Mammary epithelial cell (primary cell): ENCODE measurements at regions of chr5 and their contacts with region 1.

Region 1: GRCh38 chr5:33180900-33181299 is 259.9 kb upstream of the TARS1 start:
- DNase-seq: peak; percentile 24
- H3K4me3 ChIP-seq: no peak overlapping the region
- H3K27ac ChIP-seq: no peak overlapping the region
- H3K4me1 ChIP-seq: no peaks in the 10 kb centered on the region
- H3K27me3 ChIP-seq: no peaks in the 10 kb centered on the region
- CTCF ChIP-seq: peak in 1 of 2 donors; percentile 55

Region 2: DNA sequence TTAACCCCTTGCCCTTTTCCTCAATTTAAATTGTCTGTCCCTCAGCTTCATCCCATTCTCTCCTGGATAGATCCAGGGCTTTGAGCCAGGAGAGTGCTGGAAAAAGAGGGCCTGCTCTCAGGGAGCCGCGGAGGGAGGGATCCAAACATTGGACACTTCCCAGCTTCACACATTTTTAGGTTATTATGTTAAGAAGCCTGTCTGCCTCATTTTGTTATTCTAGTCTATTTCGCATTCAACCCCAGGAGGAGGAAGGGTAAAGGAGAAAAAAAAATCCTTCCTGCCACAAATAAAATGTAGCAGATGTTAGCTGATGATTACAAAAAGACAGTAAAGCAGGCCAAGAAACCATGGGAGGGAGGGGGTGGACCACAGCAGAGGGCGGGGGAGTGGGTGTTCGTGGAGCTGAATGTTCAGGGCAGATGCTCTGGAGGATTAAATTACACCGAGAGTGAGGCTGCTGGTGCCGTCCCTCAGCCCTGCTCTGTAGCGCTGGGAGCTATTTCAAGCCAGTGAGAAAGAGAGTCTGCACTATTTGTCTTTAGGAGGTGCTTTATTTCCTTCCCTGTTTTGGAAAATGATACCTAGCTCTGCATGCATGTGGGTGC is 675.8 kb before region 1 on chr5:
- CTCF ChIA-PET with region 1: no interaction called
- dilution Hi-C with region 1: no loop called
- in situ Hi-C with region 1: no loop called
- intact Hi-C with region 1: loop called (anchors 10 kb)
- DNase-seq: no peak
- H3K4me3 ChIP-seq: no peak overlapping the region
- H3K27ac ChIP-seq: no peak overlapping the region
- H3K4me1 ChIP-seq: peaks cover 33% of the 10 kb centered on the region
- H3K27me3 ChIP-seq: no peaks in the 10 kb centered on the region
- CTCF ChIP-seq: no peak

Region 3: GRCh38 chr5:32690153-32690552 is 490.7 kb before region 1 on chr5:
- CTCF ChIA-PET with region 1: no interaction called
- dilution Hi-C with region 1: no loop called
- in situ Hi-C with region 1: no loop called
- intact Hi-C with region 1: loop called (anchors 5 kb)
- DNase-seq: no peak
- H3K4me3 ChIP-seq: no peak overlapping the region
- H3K27ac ChIP-seq: no peak overlapping the region
- H3K4me1 ChIP-seq: no peaks in the 10 kb centered on the region
- H3K27me3 ChIP-seq: no peaks in the 10 kb centered on the region
- CTCF ChIP-seq: peak; percentile 7 to 36

Region 4: GRCh38 chr5:32767948-32768427 is 412.9 kb before region 1 on chr5:
- CTCF ChIA-PET with region 1: no interaction called
- dilution Hi-C with region 1: no loop called
- in situ Hi-C with region 1: no loop called
- intact Hi-C with region 1: no loop called
- DNase-seq: peak; percentile 86
- H3K4me3 ChIP-seq: no peak overlapping the region
- H3K27ac ChIP-seq: no peak overlapping the region
- H3K4me1 ChIP-seq: no peaks in the 10 kb centered on the region
- H3K27me3 ChIP-seq: no peaks in the 10 kb centered on the region
- CTCF ChIP-seq: no peak

Region 5: DNA sequence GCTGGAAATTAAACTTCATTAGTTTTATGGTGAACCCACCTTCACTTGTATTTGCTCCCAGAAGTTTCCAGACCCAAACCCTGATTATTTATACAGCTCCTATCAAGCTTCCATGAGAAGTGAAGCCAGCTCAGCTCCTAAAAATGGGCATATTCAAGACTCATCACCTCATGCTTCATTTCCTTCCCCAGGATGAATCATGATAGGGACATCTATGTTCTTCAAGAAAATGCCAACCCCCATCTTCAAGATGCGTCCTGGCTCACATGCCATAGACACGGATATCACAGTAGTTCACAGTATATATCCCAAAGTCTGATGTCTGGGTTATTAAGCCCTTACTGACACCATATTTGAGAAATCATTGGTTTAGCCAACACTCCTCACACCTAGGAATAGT is 252.1 kb before region 1 on chr5:
- CTCF ChIA-PET with region 1: no interaction called
- dilution Hi-C with region 1: no loop called
- in situ Hi-C with region 1: no loop called
- intact Hi-C with region 1: loop called (anchors 2 kb)
- DNase-seq: no peak
- H3K4me3 ChIP-seq: no peak overlapping the region
- H3K27ac ChIP-seq: no peak overlapping the region
- H3K4me1 ChIP-seq: no peaks in the 10 kb centered on the region
- H3K27me3 ChIP-seq: no peaks in the 10 kb centered on the region
- CTCF ChIP-seq: no peak

Region 6: DNA sequence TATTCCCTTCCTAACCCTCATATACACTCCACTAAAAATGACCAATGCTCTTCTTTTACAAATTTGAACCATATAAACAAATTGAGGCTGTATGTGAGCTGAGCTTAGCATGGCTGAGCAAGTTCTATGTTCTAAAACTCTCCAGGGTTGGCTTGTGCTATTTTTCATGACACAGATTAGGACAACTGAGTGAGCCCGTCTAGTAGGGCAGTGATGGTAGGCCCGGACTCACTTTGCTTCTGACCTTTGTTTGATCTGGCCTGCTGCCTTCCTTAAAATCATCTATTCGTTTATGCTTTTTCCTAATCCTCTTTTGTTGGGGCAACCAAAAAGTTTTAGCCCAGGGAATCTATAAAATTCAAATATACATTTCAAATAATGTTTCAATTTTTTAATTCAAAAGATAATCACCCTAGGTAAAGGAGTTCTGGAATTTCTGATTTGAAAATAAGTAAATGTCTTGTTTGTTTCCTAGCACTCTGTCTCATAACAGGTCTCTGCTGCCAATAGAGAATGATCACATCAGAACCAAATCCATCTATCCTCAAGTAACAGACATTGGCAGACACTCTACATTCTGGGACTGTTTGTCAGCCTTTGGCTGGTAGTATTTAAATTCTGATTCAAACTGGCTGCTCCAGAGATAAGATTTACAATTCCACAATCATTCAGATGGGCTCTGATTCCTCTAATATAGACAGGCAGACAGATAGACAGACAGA is 42.8 kb after region 1 on chr5:
- CTCF ChIA-PET with region 1: no interaction called
- dilution Hi-C with region 1: no loop called
- in situ Hi-C with region 1: no loop called
- intact Hi-C with region 1: no loop called
- DNase-seq: no peak
- H3K4me3 ChIP-seq: no peak overlapping the region
- H3K27ac ChIP-seq: no peak overlapping the region
- H3K4me1 ChIP-seq: no peaks in the 10 kb centered on the region
- H3K27me3 ChIP-seq: no peaks in the 10 kb centered on the region
- CTCF ChIP-seq: no peak

Region 7: GRCh38 chr5:33241802-33242201 is 60.9 kb after region 1 on chr5:
- CTCF ChIA-PET with region 1: no interaction called
- dilution Hi-C with region 1: no loop called
- in situ Hi-C with region 1: no loop called
- intact Hi-C with region 1: no loop called
- DNase-seq: no peak
- H3K4me3 ChIP-seq: no peak overlapping the region
- H3K27ac ChIP-seq: no peak overlapping the region
- H3K4me1 ChIP-seq: no peaks in the 10 kb centered on the region
- H3K27me3 ChIP-seq: no peaks in the 10 kb centered on the region
- CTCF ChIP-seq: no peak

Region 8: DNA sequence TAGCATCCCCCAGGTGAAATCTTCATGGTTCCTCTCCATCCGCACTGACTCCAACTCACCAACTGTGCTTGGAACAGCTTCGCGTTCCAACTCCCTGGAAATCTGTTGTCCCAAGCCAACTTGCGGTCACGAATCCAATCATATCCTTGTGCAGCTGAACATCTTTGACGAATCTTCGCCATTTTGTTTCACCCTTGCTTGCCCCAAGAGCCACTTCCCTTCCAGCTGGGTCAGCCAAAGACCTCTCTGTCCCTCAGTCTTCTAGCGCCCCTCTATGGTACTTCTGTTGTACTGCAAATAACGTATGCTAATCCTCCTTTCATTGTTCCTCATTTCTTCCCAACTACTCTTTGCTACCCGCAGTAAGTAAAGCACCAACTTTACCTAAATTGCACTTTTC is 198.9 kb after region 1 on chr5:
- CTCF ChIA-PET with region 1: no interaction called
- dilution Hi-C with region 1: no loop called
- in situ Hi-C with region 1: no loop called
- intact Hi-C with region 1: loop called (anchors 10 kb)
- DNase-seq: peak; percentile 20
- H3K4me3 ChIP-seq: no peak overlapping the region
- H3K27ac ChIP-seq: no peak overlapping the region
- H3K4me1 ChIP-seq: peaks cover 6% of the 10 kb centered on the region
- H3K27me3 ChIP-seq: no peaks in the 10 kb centered on the region
- CTCF ChIP-seq: peak; percentile 50 to 51